ENCODE measurements at regions of chr1 and their contacts with region 1.

Region 1: DNA sequence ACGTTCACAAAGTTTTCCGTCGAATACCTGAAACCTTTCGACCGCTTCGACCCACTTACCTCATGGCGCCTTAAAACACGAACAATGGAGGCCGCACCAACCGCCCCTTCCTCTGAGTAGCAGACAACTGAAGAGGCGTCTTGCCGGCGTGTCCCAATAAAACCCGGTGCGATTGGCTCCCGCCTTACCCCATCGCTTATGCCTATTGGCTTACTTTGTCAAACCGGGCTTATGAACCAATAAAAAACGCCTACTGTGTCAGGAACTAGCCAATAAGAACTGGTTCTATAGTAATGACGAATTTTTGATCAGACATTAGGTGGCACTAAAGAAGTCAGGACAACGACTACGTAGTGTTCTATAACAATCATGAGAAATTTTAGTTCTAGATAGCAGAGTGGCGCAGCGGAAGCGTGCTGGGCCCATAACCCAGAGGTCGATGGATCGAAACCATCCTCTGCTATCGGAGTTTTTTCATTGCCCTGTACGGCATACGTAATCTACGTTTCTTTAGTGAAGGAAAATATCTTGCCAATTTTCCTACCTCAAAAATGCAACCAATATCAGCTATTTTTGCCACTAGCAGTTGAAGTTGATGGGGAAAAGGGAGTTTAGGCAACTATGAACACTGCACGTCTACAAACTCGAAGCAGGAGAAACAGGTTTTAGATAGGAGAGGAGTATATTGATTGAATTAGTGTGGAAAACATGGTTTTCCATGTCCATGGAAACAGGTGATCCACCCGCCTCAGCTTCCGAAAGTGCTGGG is at the start of gene ILF2:
- DNase-seq: peak; percentile 99
- ATAC-seq: peak; percentile 92
- H3K4me3 Mint-ChIP-seq: no peak within 1 kb of the TSS
- H3K27ac Mint-ChIP-seq: no peak within 1 kb of the TSS
- H3K4me1 Mint-ChIP-seq: peaks cover 34% of the 10 kb centered on the region
- H3K27me3 Mint-ChIP-seq: no peaks in the 10 kb centered on the region
- total RNA-seq, gene ILF2: 325 to 435 TPM

Region 2: GRCh38 chr1:153312570-153313193 is 358.4 kb before region 1 on chr1 and contains the start of gene PGLYRP3:
- CTCF ChIA-PET with region 1: no interaction called
- POLR2A ChIA-PET with region 1: no interaction called
- intact Hi-C with region 1: no loop called
- DNase-seq: no peak
- ATAC-seq: no peak
- H3K4me3 Mint-ChIP-seq: no peak within 1 kb of the TSS
- H3K27ac Mint-ChIP-seq: no peak within 1 kb of the TSS
- H3K4me1 Mint-ChIP-seq: no peaks in the 10 kb centered on the region
- H3K27me3 Mint-ChIP-seq: peaks cover 8% of the 10 kb centered on the region
- total RNA-seq, gene PGLYRP3: not detected

Region 3: DNA sequence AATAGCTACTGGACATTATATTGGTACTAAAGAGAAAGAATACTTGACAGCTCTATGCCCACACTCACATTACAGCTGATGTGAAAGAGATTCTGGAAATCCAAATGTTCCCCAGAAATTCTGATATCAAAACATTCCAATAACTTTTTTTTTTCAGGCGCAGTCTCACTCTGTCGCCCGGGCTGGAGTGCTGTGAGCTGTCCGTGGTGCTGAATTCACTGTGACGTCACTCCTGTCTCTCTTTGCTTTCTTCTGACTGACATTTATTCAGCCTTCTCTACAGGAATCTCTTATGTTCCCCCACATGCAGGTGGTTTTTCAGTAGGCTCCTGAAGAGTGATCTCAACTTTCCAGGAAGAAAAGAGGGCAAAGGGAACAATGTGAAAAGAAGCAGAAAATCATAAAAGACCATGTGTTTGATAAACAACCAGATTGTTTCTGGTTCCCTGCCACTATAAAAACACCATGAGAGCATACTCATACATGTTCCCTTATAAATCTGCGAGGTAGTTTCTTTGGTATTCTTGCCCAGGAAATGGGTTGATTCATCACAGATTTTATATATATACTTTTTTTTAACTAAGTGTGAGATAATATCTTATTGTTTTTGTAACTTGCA is 248.5 kb before region 1 on chr1:
- CTCF ChIA-PET with region 1: no interaction called
- POLR2A ChIA-PET with region 1: no interaction called
- intact Hi-C with region 1: no loop called
- DNase-seq: peak; percentile 82
- ATAC-seq: no peak
- H3K4me3 Mint-ChIP-seq: no peak overlapping the region
- H3K27ac Mint-ChIP-seq: no peak overlapping the region
- H3K4me1 Mint-ChIP-seq: no peaks in the 10 kb centered on the region
- H3K27me3 Mint-ChIP-seq: peaks cover 41% of the 10 kb centered on the region

Region 4: DNA sequence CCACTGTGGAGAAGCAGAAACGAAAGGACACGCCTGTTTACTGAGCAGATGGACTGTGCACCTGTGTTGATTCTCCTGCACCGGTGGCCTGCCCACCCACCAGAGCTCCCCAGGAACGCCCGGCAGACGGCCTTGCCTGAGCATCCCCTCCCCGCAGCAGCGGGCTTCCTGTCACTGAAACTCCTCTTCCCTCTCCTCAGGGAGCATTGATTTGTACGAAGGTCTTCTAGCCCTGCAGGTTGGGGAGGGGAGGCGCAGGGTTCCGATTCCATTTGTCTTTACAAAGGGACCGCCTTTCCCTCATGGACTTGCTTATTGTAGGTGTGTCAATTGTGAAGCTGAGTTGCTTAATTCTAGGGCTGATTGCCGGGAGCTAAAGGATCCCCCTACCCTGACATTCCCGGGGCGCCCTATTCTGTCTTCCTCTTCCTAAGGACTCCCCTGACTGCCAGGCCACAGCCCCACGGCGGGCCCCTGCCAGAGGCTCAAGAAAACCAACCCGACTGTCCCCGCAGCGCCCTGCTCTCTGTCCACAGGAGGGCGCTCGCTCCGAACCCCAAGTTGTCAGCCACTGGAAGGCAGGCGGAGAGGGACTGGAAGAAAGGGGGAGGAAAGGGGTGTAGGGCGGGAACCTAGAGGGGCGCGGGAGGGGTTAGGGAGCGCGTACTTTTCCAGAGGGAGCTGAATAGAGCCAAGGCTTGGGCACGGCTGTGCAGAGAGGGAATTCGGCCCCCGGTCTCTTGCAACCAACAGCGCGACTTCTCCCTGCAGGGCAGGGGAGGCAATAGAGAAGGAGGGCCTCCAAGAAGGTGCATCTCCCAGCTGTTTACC is 138.1 kb before region 1 on chr1:
- CTCF ChIA-PET with region 1: interaction called, 3 read pairs
- POLR2A ChIA-PET with region 1: no interaction called
- intact Hi-C with region 1: loop called in 1 of 2 experiments (anchors 2 kb)
- DNase-seq: peak; percentile 91
- ATAC-seq: peak; percentile 31
- H3K4me3 Mint-ChIP-seq: peak overlapping the region; percentile 89
- H3K27ac Mint-ChIP-seq: peak overlapping the region; percentile 94
- H3K4me1 Mint-ChIP-seq: peaks cover 58% of the 10 kb centered on the region
- H3K27me3 Mint-ChIP-seq: no peaks in the 10 kb centered on the region

Region 5: GRCh38 chr1:153658400-153659174 is 12.5 kb before region 1 on chr1 and contains the start of gene SNAPIN:
- CTCF ChIA-PET with region 1: interaction called, 3 read pairs
- POLR2A ChIA-PET with region 1: interaction called, 4 read pairs
- intact Hi-C with region 1: loop called (anchors 1 kb)
- DNase-seq: peak; percentile 96
- ATAC-seq: peak; percentile 96
- H3K4me3 Mint-ChIP-seq: peak within 1 kb of the TSS; percentile 95
- H3K27ac Mint-ChIP-seq: peak within 1 kb of the TSS; percentile 90
- H3K4me1 Mint-ChIP-seq: peaks cover 13% of the 10 kb centered on the region
- H3K27me3 Mint-ChIP-seq: no peaks in the 10 kb centered on the region
- total RNA-seq, gene SNAPIN: 34.2 to 38.4 TPM

Region 6: DNA sequence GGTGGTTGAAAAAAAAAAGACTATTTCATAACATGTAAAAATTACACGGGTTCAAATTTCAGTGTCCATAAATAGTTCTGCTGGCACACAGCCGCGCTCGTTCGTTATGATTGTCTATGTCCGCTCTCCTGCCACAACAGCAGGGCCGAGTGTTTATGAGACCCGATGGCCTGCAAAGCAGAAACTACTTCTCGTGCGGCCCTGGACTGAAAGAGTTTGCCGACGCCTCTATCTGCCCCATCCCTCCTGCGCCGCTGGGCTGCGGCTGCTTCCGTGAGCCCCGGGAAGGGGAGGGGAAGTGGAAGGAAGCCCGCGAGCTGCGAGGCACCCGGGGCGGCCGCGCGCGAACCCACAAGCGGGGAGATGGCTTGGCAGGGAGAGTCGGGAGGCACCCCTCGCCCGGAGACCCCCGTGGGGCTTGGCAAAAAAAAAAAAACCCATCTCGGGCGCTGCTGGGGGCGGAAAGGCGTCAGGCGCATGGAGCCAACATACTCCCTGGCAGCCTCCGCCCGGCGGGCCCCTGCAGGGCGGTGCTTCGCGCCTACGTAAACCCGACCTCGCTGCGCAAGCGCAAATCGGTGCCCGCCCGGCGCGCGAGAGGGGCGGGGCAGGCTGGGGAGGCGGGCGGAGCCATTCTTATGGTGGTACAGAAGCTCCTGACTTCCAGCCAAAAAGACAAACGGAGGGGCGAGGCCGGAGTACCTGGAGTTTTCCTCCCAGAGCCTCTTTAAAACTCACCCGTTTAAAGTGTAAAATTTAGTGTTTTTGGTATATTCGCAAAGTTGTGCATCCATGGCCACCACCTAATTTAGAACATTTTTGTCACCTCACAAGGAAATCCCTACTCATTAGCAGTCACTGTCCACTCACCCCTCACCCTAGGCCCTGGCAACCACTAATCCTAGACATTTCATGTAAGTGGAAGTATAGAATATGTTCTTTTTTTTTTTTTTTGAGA is 112.5 kb after region 1 on chr1:
- CTCF ChIA-PET with region 1: interaction called, 3 read pairs
- POLR2A ChIA-PET with region 1: no interaction called
- intact Hi-C with region 1: loop called (anchors 2 to 10 kb)
- DNase-seq: peak; percentile 95
- ATAC-seq: peak; percentile 96
- H3K4me3 Mint-ChIP-seq: peak overlapping the region; percentile 90
- H3K27ac Mint-ChIP-seq: peak overlapping the region; percentile 97
- H3K4me1 Mint-ChIP-seq: peaks cover 12% of the 10 kb centered on the region
- H3K27me3 Mint-ChIP-seq: no peaks in the 10 kb centered on the region

Region 7: GRCh38 chr1:153946622-153947241 is 275.7 kb after region 1 on chr1 and contains the start of gene DENND4B:
- CTCF ChIA-PET with region 1: interaction called, 3 read pairs
- POLR2A ChIA-PET with region 1: no interaction called
- intact Hi-C with region 1: loop called in 1 of 2 experiments (anchors 2 kb)
- DNase-seq: peak; percentile 87
- ATAC-seq: peak; percentile 74
- H3K4me3 Mint-ChIP-seq: peak within 1 kb of the TSS; percentile 88
- H3K27ac Mint-ChIP-seq: peak within 1 kb of the TSS; percentile 96
- H3K4me1 Mint-ChIP-seq: peaks cover 24% of the 10 kb centered on the region
- H3K27me3 Mint-ChIP-seq: no peaks in the 10 kb centered on the region
- total RNA-seq, gene DENND4B: 100 to 110 TPM

Region 8: GRCh38 chr1:154183045-154183915 is 512.2 kb after region 1 on chr1:
- CTCF ChIA-PET with region 1: no interaction called
- POLR2A ChIA-PET with region 1: no interaction called
- intact Hi-C with region 1: loop called (anchors 1 to 5 kb)
- DNase-seq: peak; percentile 98
- ATAC-seq: peak; percentile 72
- H3K4me3 Mint-ChIP-seq: peak overlapping the region; percentile 99
- H3K27ac Mint-ChIP-seq: peak overlapping the region; percentile 100
- H3K4me1 Mint-ChIP-seq: peaks cover 39% of the 10 kb centered on the region
- H3K27me3 Mint-ChIP-seq: no peaks in the 10 kb centered on the region

Region 9: DNA sequence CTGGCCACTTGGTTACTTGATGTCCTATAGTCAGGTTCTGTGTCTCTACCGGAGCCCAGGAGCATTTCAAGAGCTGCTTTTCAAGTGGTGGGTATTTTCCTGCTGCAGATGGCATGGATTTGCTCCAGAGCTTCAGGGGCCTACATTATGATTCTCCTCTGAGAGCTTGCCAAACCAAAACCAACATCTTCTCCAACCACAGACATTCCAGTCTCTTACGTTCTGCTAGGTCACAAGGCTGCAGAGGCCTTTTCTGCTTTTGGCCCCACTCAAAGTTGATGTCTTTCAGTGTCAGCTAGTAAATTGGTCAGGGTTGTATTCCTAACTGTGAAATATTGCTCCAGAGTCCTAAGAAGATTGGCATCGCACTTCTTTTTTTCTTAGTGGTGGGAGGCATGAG is 635.1 kb after region 1 on chr1:
- CTCF ChIA-PET with region 1: no interaction called
- POLR2A ChIA-PET with region 1: no interaction called
- intact Hi-C with region 1: no loop called
- DNase-seq: no peak
- ATAC-seq: no peak
- H3K4me3 Mint-ChIP-seq: no peak overlapping the region
- H3K27ac Mint-ChIP-seq: peak overlapping the region; percentile 23
- H3K4me1 Mint-ChIP-seq: peaks cover 24% of the 10 kb centered on the region
- H3K27me3 Mint-ChIP-seq: no peaks in the 10 kb centered on the region

Region 10: DNA sequence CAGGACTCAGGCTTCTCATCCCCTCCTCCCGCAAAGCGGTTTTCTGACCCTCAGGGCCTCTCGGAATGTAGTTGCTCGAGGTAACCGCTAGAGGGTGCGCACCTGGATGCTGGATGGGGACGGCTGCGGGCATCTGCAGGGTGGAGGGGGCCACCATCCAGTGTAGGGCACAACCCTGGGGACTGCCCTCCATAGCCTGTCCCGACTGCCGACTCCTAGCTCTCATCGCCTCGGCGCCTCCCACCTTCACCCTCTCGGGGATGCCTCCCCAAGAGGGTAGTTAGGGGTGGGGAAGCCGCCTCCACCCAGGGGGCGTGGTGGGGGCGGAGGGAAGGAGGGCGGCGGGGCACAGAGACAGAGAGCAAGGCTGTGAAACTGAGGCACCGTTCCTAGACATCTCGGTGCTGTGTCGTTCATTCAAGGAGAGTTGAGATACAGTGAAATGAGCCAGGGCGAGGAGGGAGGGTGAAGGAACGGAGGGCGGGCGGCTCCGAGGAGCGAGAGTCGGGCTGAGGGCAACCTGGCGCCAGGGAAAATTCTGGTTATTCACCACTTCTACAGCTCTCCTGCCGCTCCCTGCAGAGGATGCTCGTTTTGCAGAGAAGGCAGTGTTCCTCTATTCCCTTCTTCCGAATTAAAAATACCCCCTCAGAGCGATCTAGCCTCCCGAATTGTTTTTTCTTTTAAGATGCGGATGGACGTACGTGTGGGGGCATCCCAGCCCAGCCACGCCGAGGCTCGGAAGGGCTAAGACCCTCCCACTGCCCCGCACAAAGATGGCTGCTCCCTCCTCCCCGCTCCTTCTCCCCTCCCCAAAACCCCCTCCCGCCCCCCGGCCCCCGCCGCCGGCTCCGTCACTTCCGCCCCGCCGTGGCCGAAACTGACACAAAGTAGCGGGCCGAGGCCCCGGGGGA is 653.9 kb after region 1 on chr1 and contains the start of gene ATP8B2:
- CTCF ChIA-PET with region 1: no interaction called
- POLR2A ChIA-PET with region 1: no interaction called
- intact Hi-C with region 1: loop called in 1 of 2 experiments (anchors 2 kb)
- DNase-seq: peak; percentile 92
- ATAC-seq: peak; percentile 70
- H3K4me3 Mint-ChIP-seq: peak within 1 kb of the TSS; percentile 99
- H3K27ac Mint-ChIP-seq: peak within 1 kb of the TSS; percentile 94
- H3K4me1 Mint-ChIP-seq: peaks cover 39% of the 10 kb centered on the region
- H3K27me3 Mint-ChIP-seq: no peaks in the 10 kb centered on the region
- total RNA-seq, gene ATP8B2: 48.2 TPM